ENCODE measurements at regions of chr1 and their contacts with region 1.

Region 1: GRCh38 chr1:150363426-150364230 is at the start of gene RPRD2:
- DNase-seq: peak; percentile 100
- H3K4me3 ChIP-seq: peak within 1 kb of the TSS; percentile 76 to 86 (median 79)
- H3K27ac ChIP-seq: peak within 1 kb of the TSS; percentile 96 to 98 (median 98)
- H3K4me1 ChIP-seq: peaks cover 11 to 36% (median 32%) of the 10 kb centered on the region in 4 donors
- H3K27me3 ChIP-seq: no peaks in the 10 kb centered on the region
- CTCF ChIP-seq: peak in 1 of 3 experiments; percentile 10
- EP300 ChIP-seq: no peak
- POLR2A ChIP-seq: peak; percentile 62
- total RNA-seq, gene RPRD2: 20.0 to 27.9 (median 24.8) TPM

Region 2: DNA sequence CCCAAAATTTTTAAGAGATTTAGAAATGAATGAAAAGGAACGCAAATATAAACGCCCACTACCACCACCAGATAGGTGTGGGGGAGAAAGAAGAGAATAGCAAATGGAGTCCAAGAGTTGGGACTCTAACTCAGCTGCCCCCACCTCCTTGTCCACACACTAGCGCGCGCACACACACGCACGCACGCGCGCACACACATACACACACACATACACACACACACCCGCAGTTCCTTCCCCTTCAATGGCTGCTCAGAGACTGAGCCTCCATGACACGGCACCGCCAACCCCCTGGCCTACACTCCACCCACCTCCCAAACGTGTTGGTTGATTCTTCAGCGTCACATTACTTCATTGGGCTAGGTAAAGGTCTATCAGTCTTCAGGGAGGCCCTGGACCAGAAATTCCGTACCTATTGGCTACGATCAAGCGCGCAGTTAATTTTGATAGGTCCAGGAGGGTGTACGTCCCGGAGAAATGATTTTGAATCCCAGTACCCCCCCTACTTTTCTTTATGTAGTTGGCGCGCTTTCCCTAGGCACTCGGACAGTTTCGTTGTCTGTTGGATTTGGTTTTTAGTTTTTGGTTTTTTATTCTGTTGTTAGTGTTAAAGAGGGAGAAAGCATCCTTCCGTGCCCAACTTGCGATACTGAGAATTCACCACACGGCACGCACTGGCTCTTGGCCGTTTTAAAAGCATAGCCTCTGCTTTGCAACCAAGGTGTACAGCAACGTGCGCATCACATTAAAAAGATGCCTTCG is 127.6 kb before region 1 on chr1 and contains the start of gene ANP32E:
- intact Hi-C with region 1: loop called (anchors 5 kb)
- DNase-seq: peak; percentile 99
- H3K4me3 ChIP-seq: peak within 1 kb of the TSS; percentile 84 to 100 (median 86)
- H3K27ac ChIP-seq: peak within 1 kb of the TSS; percentile 96 to 100 (median 99)
- H3K4me1 ChIP-seq: peaks cover 4 to 18% (median 16%) of the 10 kb centered on the region in 4 donors
- H3K27me3 ChIP-seq: no peaks in the 10 kb centered on the region
- CTCF ChIP-seq: peak in 2 of 3 experiments; percentile 36 to 43
- EP300 ChIP-seq: no peak
- POLR2A ChIP-seq: peak; percentile 72
- total RNA-seq, gene ANP32E: 15.6 to 20.3 (median 18.6) TPM

Region 3: DNA sequence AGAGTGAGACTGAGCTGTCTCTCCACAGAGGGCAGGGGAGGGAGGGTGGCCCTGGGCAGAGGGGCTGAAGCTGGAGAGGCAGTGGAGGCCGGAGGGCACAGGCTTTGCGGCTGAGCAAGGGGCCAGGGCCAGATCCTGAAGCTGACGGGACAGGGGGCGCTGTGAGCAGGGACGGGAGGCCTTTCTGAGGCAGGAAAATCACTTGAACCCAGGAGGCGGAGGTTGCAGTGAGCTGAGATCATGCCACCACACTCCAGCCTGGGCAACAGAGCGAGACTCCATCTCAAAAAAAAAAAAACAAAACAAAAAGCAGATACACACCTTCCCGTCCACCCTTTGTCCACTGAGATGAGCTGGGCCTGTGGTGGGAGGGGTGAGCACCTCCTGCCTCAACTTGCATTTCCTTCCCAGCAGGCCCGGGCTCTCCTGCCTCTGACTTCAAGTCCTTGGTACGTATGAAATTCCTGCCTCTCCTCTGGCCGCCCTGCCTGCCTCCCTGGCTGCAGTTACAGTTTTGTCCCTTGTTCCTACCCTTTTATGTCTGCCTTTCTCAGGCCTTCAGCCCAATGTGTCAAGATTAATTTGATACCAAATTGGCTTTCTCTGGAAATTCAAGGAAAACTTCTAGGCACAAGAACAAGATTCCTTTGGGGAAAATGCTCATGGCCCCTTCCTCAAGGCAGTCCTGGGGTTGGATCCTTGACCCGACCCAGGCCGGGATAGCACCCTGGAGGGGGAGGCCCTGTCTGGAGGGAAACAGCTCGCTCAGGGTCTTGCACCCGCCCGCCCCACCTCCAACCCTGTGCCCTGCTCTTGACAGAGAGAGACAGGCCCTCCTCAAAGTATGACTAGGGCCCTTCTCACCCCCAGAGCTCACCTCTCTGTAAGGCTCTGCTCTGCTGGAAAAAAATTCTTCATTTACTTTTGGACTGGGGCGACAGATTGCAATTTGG is 174.4 kb after region 1 on chr1:
- intact Hi-C with region 1: loop called (anchors 10 kb)
- DNase-seq: peak; percentile 89
- H3K4me3 ChIP-seq: no peak overlapping the region
- H3K27ac ChIP-seq: peak overlapping the region; percentile 70 to 86 (median 72)
- H3K4me1 ChIP-seq: peaks cover 17 to 56% (median 47%) of the 10 kb centered on the region in 4 donors
- H3K27me3 ChIP-seq: no peaks in the 10 kb centered on the region
- CTCF ChIP-seq: no peak
- EP300 ChIP-seq: no peak
- POLR2A ChIP-seq: no peak

Region 4: GRCh38 chr1:151705753-151706463 is 1342.3 kb after region 1 on chr1:
- intact Hi-C with region 1: no loop called
- DNase-seq: no peak
- H3K4me3 ChIP-seq: no peak overlapping the region
- H3K27ac ChIP-seq: no peak overlapping the region
- H3K4me1 ChIP-seq: no peaks in the 10 kb centered on the region
- H3K27me3 ChIP-seq: no peaks in the 10 kb centered on the region
- CTCF ChIP-seq: no peak
- EP300 ChIP-seq: no peak
- POLR2A ChIP-seq: no peak